ENCODE measurements at regions of chr11 and their contacts with region 1.

Region 1: GRCh38 chr11:33829433-33830141 is 55.3 kb upstream of the FBXO3 start:
- DNase-seq: peak; percentile 28
- ATAC-seq: peak; percentile 96
- H3K4me3 ChIP-seq: no peak overlapping the region; the same call in 1 of the 2 replicates
- H3K27ac ChIP-seq: no peak overlapping the region
- H3K4me1 ChIP-seq: peaks cover 4% of the 10 kb centered on the region; the same call in 1 of the 2 replicates
- H3K27me3 ChIP-seq: peaks cover 10 to 12% of the 10 kb centered on the region in 2 experiments; a peak in 3 of 4 replicates
- CTCF ChIP-seq: peak; percentile 78 to 89 (median 87)
- EP300 ChIP-seq: no peak
- POLR2A ChIP-seq: no peak
- RAD21 ChIP-seq: peak; percentile 95

Region 2: DNA sequence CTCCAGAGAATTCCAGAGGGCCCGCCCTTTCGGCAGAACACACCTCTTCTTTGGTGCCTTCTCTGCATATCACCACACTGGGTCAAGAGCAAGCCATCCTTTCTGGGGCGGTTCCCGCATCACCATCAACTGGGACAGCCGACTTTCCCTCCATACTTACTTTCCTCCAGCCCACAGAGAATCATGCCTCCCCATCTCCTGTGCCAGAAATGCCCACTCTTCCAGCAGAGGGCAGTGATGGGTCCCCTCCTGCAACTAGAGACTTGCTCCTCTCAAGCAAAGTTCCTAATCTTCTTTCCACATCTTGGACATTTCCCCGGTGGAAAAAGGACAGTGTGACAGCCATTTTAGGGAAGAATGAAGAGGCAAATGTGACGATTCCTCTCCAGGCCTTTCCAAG is 286.7 kb before region 1 on chr11:
- CTCF ChIA-PET with region 1: interaction called, 3 read pairs
- POLR2A ChIA-PET with region 1: no interaction called
- RAD21 ChIA-PET with region 1: no interaction called
- SMC1A ChIA-PET with region 1: interaction called, 4 read pairs
- in situ Hi-C with region 1: no loop called
- intact Hi-C with region 1: loop called (anchors 10 kb)
- DNase-seq: no peak
- ATAC-seq: peak; percentile 84
- H3K4me3 ChIP-seq: no peak overlapping the region
- H3K27ac ChIP-seq: no peak overlapping the region
- H3K4me1 ChIP-seq: peaks cover 24% of the 10 kb centered on the region
- H3K27me3 ChIP-seq: no peaks in the 10 kb centered on the region; a peak in 1 of 4 replicates
- CTCF ChIP-seq: peak; percentile 63 to 72 (median 67)
- EP300 ChIP-seq: no peak
- POLR2A ChIP-seq: no peak
- RAD21 ChIP-seq: peak; percentile 74